PC-3 (cell line): ENCODE measurements at regions of chr12 and their contacts with region 1.

Region 1: DNA sequence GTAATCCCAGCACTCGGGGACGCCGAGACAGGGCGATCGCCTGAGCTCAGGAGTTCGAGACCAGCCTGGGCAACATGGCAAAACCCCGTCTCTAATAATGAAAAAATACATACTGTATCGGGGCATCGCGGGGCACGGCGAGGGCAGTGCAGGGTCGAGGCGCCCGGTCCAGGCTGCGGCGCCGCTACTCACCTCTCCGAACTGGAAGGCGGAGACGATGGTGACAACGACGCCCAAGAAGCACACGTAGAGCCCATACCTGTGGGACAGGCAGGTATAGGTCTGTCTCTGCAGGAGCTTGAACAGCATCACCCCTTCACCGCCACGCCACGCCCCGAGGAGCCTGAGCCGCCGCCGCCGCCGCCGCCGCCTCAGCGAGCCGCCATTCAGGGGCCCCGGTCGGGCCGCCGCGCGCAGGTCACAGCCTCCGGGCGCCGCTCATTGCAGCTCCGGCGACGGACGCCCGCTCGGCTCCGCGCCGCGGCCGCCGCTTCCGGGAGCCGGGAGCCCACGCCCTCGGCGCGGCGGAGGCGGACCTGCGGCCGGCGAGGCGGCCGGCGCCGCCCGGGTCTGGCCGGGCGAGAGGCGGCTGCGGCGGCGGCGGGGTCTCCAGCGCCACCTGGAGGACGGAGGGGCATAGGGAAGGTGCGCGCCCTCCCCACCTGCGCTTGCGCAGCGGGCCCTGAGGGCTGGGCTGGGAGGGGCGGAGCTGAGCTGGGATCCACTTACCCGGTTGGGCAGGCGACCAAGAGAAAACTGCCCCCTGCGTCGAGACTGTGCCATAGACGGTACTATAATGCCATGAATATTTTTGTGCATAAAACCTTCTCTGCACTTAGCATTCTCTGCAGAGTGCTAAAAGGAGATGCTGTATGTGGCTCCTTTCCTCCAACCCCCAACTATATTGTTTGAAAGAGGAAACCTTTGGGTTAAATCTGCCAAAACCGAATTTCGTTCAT is at the start of gene GNPTAB:
- DNase-seq: peak; percentile 96
- ATAC-seq: peak; percentile 92
- H3K4me3 ChIP-seq: peak within 1 kb of the TSS; percentile 96
- H3K27ac ChIP-seq: no peak within 1 kb of the TSS
- H3K4me1 ChIP-seq: peaks cover 10% of the 10 kb centered on the region
- H3K27me3 ChIP-seq: no peaks in the 10 kb centered on the region
- CTCF ChIP-seq: peak; percentile 69
- total RNA-seq, gene GNPTAB: 21.0 and 22.1 TPM in 2 replicates

Region 2: DNA sequence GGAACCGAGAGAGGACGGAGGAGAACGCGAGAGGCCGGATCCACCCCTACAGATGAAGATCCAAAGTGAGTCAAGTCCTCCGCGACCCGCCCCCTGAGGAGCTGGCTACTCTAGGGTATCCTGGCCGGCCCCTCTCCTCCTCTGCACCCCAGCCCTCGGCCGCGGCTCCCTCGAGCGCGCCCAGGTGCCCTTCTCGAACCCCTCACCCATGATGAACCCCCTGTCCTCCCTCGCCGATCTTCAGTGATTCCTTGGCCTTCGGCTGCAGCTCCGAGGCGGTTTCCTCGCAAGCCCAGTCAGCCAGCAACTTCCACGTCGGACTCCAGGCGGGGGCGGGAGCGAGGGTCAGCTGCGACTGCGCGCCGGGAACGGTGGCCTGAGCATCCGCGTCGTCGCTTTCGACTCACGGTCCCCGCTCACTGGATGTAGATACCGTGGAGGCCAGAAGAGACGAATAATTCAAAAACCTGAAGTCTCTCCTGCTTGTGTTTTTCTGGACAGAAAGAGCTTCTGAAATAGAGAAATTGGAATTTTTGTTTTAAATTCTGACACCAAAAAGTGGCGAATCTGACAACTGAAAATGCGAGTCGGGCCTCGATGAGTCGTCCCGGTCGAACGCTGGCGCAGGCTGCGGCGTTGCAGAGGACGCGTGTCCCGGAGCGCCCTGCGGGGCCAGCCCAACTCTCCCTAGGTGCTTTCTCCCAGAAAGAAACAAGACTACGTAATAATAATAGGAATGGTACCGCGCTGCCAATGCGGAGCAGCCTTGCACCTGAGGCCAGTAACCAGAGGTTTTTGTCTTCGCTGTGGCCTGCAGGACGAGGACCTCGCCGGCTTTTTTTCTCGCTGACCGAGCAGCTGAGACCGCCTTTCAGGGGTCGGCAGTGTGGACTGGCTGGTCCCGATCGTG is 423.0 kb before region 1 on chr12 and contains the start of gene ARL1:
- CTCF ChIA-PET with region 1: interaction called, 3 read pairs
- POLR2A ChIA-PET with region 1: interaction called, 6 read pairs
- intact Hi-C with region 1: loop called (anchors 2 kb)
- DNase-seq: peak; percentile 85
- ATAC-seq: peak; percentile 86
- H3K4me3 ChIP-seq: peak within 1 kb of the TSS; percentile 83
- H3K27ac ChIP-seq: peak within 1 kb of the TSS; percentile 73
- H3K4me1 ChIP-seq: peaks cover 19% of the 10 kb centered on the region
- H3K27me3 ChIP-seq: no peaks in the 10 kb centered on the region
- CTCF ChIP-seq: no peak
- total RNA-seq, gene ARL1: 106 and 107 TPM in 2 replicates

Region 3: DNA sequence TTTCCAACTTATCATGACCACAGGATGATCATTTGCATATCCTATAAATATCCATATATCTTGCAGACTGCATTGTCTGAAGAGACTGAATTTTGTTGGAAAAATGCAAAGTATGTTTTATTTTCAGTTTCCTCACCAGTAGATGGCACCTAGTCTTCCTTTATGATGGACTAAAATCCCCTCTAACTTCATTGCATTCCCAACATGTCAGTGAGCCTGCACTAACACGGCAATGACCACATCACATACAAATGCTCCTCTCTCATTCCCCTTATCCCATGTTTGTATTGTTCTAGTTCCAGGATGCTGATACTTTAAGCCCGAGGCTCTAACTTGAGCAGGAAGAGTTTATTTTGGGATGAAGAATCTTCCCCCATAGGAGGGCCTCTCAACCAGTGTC is 260.6 kb before region 1 on chr12:
- CTCF ChIA-PET with region 1: no interaction called
- POLR2A ChIA-PET with region 1: no interaction called
- intact Hi-C with region 1: loop called (anchors 2 kb)
- DNase-seq: peak; percentile 59
- ATAC-seq: peak; percentile 70
- H3K4me3 ChIP-seq: no peak overlapping the region
- H3K27ac ChIP-seq: no peak overlapping the region
- H3K4me1 ChIP-seq: no peaks in the 10 kb centered on the region
- H3K27me3 ChIP-seq: peaks cover 66% of the 10 kb centered on the region
- CTCF ChIP-seq: peak; percentile 69

Region 4: GRCh38 chr12:101697197-101697929 is 133.3 kb before region 1 on chr12 and contains the start of gene CHPT1:
- CTCF ChIA-PET with region 1: no interaction called
- POLR2A ChIA-PET with region 1: no interaction called
- intact Hi-C with region 1: loop called (anchors 5 kb)
- DNase-seq: peak; percentile 47
- ATAC-seq: peak; percentile 70
- H3K4me3 ChIP-seq: peak within 1 kb of the TSS; percentile 89
- H3K27ac ChIP-seq: no peak within 1 kb of the TSS
- H3K4me1 ChIP-seq: peaks cover 12% of the 10 kb centered on the region
- H3K27me3 ChIP-seq: no peaks in the 10 kb centered on the region
- CTCF ChIP-seq: no peak
- total RNA-seq, gene CHPT1: 55.3 and 56.2 TPM in 2 replicates

Region 5: GRCh38 chr12:101773650-101774162 is 56.9 kb before region 1 on chr12:
- CTCF ChIA-PET with region 1: interaction called, 19 read pairs
- POLR2A ChIA-PET with region 1: no interaction called
- intact Hi-C with region 1: loop called (anchors 1 kb)
- DNase-seq: peak; percentile 81
- ATAC-seq: peak; percentile 84
- H3K4me3 ChIP-seq: no peak overlapping the region
- H3K27ac ChIP-seq: no peak overlapping the region
- H3K4me1 ChIP-seq: no peaks in the 10 kb centered on the region
- H3K27me3 ChIP-seq: no peaks in the 10 kb centered on the region
- CTCF ChIP-seq: peak; percentile 95

Region 6: GRCh38 chr12:101792051-101792931 is 38.4 kb before region 1 on chr12:
- CTCF ChIA-PET with region 1: interaction called, 4 read pairs
- POLR2A ChIA-PET with region 1: no interaction called
- intact Hi-C with region 1: loop called (anchors 2 kb)
- DNase-seq: peak; percentile 20
- ATAC-seq: peak; percentile 81
- H3K4me3 ChIP-seq: no peak overlapping the region
- H3K27ac ChIP-seq: no peak overlapping the region
- H3K4me1 ChIP-seq: no peaks in the 10 kb centered on the region
- H3K27me3 ChIP-seq: no peaks in the 10 kb centered on the region
- CTCF ChIP-seq: peak; percentile 55

Region 7: DNA sequence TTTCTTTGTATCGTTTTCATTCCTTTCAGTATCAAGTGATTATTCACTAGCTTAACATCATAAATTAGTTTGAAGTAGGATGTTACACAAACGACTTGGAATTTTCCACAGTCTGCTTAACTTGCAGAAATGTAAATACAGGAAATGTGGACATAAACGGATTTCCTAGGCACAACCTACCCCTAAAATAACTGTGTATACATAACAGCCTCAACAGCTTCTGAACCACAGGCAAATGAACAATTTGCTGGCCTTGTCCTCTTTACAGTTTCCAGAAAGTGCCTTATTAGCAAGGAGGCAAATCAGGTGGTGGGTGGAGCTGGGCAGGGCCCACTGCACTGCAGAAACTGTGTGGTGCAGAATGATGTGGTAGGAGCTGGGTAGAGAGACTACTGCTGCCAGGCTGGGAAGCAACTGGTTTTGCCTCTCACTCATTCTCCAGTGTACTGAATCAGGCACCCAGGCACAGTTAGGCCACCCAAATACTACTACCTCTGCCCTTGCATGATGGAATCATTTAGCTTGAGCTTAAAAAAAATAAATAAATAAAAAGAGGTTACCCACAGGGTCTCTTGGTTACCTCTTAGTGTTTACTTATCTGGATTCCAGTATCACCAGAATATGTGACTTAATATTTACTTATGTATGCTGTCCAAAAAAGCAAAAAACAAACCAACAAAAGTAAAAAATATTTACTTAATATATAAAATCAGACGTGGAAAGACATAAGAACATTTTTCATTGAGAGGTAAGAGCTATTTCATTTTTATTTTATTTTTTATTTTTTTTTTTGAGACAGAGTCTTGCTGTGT is 61.0 kb after region 1 on chr12:
- CTCF ChIA-PET with region 1: interaction called, 4 read pairs
- POLR2A ChIA-PET with region 1: no interaction called
- intact Hi-C with region 1: loop called (anchors 5 kb)
- DNase-seq: peak; percentile 69
- ATAC-seq: peak; percentile 67
- H3K4me3 ChIP-seq: peak overlapping the region; percentile 36; the same call in 1 of the 2 replicates
- H3K27ac ChIP-seq: peak overlapping the region; percentile 24
- H3K4me1 ChIP-seq: peaks cover 44% of the 10 kb centered on the region
- H3K27me3 ChIP-seq: no peaks in the 10 kb centered on the region
- CTCF ChIP-seq: no peak